BJ (cell line): ENCODE measurements at regions of chr12 and their contacts with region 1.

Region 1: DNA sequence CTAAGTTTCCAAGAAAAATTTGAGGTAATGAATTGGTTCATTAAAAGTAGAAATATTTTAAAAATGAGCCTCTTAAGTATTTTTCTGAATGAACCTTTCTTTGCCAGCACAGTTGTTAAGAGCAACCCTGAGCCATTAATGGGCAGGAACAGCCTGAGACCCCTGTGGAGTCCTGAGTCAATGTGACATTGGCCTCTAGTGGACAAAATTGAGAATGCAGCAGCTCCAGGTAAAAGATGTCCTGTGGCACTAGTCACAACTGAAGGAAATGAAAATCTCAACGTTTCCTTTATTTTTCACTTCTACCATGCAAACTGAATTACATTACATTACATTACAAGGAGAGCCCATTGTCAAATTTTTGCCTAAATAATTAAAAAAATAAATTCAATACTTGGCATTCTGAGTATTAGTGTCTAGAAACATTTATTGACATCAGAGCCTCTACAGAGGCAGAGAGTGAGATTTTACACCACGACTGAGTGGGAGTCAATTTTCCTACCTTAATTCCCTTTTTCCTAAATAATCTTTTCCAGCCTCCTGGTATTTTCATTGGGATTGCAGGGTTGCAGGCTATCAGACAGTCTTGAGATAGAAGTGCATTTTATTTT is 135.7 kb downstream of the PPM1H start:
- DNase-seq: no peak
- H3K4me3 ChIP-seq: no peak overlapping the region
- H3K27me3 ChIP-seq: no peaks in the 10 kb centered on the region
- CTCF ChIP-seq: peak; percentile 90

Region 2: GRCh38 chr12:62435303-62436163 is 363.7 kb before region 1 on chr12:
- CTCF ChIA-PET with region 1: interaction called, 97 read pairs
- POLR2A ChIA-PET with region 1: no interaction called
- DNase-seq: no peak
- H3K4me3 ChIP-seq: peak overlapping the region; percentile 45
- H3K27me3 ChIP-seq: peaks cover 9% of the 10 kb centered on the region; the same call in 1 of the 2 replicates
- CTCF ChIP-seq: peak; percentile 77

Region 3: DNA sequence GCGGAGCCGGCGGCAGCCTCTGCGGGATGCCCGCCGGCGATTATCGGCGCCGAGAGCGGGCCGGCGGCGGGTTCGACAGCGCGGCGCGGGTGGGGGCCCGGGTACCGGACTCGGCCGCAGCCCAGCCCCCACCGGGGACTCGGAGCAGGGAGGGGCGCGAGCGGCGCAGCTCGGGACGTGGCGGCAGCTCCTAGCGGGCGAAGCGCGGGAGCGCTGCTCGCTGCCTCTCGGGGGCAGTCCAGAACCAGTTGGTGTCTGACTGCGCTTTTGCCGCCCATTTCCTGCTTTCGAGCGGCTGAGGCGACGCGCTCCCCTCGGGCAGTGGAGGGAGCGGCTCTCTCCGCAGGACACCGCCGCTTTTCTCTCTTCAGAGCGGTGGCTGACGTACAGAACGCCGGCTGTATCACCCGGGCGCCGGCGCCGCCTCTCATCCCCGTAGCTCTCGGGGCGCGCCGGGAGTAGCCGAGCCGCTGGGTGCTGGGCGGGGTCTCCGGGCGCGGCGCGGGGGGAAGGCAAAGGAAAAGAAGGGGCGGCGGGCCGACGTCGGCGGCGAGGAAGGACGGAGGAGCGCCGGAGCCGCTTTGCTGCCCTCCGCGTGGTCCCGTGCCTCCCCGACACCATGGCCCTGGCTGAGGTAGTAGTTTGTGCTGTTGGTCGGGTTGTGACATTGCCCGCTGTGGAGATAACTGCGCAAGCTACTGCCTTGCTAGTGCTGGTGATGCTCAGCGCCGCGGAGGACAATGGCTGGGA is 196.0 kb before region 1 on chr12:
- CTCF ChIA-PET with region 1: interaction called, 33 read pairs
- POLR2A ChIA-PET with region 1: interaction called, 3 read pairs
- DNase-seq: peak; percentile 47
- H3K4me3 ChIP-seq: peak overlapping the region; percentile 69
- H3K27me3 ChIP-seq: no peaks in the 10 kb centered on the region
- CTCF ChIP-seq: peak; percentile 58

Region 4: GRCh38 chr12:62813031-62813829 is 14.0 kb after region 1 on chr12:
- CTCF ChIA-PET with region 1: interaction called, 59 read pairs
- POLR2A ChIA-PET with region 1: no interaction called
- DNase-seq: no peak
- H3K4me3 ChIP-seq: no peak overlapping the region
- H3K27me3 ChIP-seq: no peaks in the 10 kb centered on the region
- CTCF ChIP-seq: peak; percentile 88

Region 5: DNA sequence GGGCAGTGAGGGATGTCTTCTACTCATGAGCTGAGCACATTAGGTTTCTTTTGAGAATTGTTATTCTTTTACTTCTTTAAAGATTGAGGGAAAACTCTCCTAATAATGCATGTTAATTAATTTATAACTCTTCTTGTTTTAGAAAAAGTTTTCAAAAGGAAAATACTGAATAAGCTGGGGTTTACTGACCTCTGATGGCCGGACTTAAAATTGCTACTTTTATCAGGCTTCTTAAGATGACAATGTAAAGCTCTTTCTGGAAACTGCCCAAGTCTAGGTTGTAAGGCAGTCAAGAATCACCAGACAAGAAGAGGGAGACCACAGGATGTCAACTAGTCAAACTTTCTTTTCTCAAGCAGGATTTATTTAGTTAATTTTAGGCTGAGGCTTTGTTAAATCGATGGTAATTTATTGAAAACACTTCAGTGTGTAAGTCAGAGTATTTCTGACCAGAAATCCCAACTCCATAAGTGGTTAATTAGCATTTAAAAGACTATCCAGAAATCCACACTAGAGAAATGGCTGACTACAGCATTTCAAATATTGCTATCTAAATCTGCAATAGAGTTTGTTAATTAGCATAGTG is 269.7 kb after region 1 on chr12:
- CTCF ChIA-PET with region 1: interaction called, 62 read pairs
- POLR2A ChIA-PET with region 1: no interaction called
- DNase-seq: no peak
- H3K4me3 ChIP-seq: no peak overlapping the region
- H3K27me3 ChIP-seq: no peaks in the 10 kb centered on the region
- CTCF ChIP-seq: peak; percentile 66